WTC11 (cell line): ENCODE measurements at regions of chr20 and their contacts with region 1.

Region 1: DNA sequence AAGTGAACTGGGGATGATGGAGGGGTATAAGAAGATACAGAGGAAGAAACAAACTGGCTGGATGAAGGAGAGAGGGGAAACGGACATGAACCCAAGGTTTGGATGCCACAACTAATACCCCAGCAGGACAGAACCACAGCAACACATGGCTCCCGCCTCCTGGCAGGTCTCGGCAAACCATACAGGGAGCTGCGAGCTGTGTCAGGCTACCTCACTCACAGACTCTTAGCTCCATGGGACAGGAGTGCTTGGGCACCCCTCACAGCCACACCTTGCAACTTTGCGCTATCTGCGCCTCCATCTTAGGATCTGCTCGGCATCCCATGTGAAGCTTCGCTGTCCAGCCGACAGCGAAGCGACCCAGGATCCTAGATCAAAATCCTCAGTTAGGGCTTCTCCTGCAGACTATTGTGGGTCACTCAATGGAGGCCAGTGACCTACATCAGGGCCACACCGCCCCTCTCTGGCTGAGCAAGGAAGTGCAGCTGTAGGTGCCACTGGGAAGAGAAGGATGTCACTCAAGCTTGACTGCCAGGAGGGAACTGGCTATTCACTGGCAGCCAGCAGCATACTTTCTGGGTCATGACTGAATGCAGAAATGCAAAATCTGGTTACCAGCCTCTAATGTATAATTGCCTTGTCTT is 174.4 kb upstream of the RIN2 start:
- DNase-seq: peak; percentile 93
- ATAC-seq: peak; percentile 96
- H3K4me3 Mint-ChIP-seq: no peak overlapping the region
- H3K27ac Mint-ChIP-seq: no peak overlapping the region
- H3K4me1 Mint-ChIP-seq: peaks cover 13% of the 10 kb centered on the region
- H3K27me3 Mint-ChIP-seq: no peaks in the 10 kb centered on the region; the same call in 1 of the 2 replicates
- CTCF ChIP-seq: peak; percentile 86

Region 2: DNA sequence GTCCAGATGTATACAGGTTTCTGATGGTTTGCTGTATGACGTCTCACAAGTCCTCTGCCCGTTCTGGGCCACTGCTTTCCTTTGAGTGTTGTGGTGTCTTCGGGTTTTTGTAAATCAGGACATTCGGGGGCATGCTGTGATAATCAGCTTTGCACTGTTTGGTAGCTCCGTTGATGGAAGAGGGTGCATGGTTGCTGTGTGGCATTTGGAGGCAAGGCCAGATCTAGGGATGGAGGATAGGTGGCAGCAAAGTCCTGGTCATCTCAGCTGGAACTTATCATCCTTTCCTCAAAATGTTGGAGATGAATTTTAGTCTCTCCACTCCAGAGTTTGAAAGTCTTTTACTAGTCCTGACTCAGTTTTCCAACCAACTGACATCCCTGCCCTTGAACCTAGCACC is 679.0 kb before region 1 on chr20:
- CTCF ChIA-PET with region 1: interaction called, 10 read pairs
- POLR2A ChIA-PET with region 1: no interaction called
- DNase-seq: peak; percentile 13
- ATAC-seq: peak; percentile 62; the same call in 1 of the 2 replicates
- H3K4me3 Mint-ChIP-seq: no peak overlapping the region
- H3K27ac Mint-ChIP-seq: no peak overlapping the region
- H3K4me1 Mint-ChIP-seq: peaks cover 37% of the 10 kb centered on the region
- H3K27me3 Mint-ChIP-seq: no peaks in the 10 kb centered on the region; the same call in 1 of the 2 replicates
- CTCF ChIP-seq: no peak

Region 3: DNA sequence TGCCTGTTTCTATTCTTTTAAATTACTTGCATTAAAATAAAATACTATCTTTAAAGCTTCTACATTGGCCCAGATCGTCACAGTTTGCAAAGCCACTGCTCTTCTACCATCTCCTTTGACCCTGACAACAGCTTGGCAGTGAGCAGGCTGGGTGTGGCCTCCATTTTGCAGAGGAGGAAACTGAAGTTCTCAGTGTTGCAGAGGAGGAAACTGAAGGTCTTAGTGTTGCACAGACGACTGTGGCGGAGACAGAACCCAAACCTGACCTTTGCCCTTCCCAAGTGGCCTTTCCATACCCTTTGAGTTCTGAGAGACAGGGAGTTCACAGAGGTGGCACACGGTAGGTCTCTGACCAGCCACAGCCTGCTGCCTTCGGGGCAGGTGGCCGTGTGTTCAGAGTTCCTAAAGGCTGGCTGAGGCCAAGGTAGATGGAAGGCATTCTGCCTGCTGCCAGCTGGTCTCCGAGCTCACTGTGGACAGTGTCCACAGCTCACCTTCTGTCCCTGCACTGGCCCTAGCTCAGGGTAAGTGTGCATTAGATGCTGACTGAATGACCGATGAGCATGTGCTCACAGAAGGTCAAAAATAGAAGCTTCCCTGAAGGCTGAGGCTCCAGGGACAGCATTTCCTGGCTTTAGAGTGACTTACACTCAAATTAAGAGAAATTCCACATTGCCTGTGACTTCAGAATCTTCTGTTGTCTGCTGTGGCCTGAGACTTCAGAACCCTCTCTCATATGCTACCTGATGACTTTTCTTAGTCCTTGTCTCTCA is 484.7 kb before region 1 on chr20:
- CTCF ChIA-PET with region 1: interaction called, 10 read pairs
- POLR2A ChIA-PET with region 1: no interaction called
- DNase-seq: no peak
- ATAC-seq: no peak
- H3K4me3 Mint-ChIP-seq: no peak overlapping the region
- H3K27ac Mint-ChIP-seq: no peak overlapping the region
- H3K4me1 Mint-ChIP-seq: peaks cover 25% of the 10 kb centered on the region
- H3K27me3 Mint-ChIP-seq: no peaks in the 10 kb centered on the region
- CTCF ChIP-seq: no peak

Region 4: DNA sequence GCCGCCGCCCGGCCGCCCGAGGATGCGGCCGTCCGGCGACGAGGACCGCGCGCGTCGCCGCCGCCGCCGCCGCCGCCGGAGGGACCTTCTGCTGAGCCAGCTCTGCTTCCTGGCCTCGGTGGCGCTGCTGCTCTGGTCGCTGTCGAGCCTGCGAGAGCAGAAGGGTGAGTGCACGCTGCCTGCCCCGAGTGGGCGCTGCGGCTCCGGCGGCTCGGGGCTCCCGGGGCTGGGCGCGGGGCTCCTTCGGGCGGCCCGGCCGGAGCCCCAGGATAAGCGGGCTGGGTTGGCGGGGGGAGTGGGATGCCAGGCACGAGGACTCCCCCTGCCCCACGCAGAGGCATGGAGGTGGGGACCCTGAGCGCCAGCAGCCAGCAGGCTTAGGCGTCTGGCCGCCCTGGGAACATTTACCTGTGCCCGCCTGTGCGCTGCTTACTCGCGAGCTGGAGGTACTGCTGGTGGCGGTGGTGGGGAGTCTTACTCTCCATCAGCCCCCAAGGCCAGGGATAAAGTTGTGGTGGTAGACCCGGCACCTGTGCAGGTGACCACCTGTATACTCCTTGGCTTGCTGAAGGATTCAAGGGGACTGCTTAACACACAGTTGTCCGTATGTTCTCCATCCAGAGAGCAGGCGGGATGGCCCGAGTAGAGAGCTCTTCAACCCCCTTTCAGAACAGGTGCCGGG is 370.7 kb before region 1 on chr20:
- CTCF ChIA-PET with region 1: interaction called, 92 read pairs
- POLR2A ChIA-PET with region 1: no interaction called
- DNase-seq: peak; percentile 77
- ATAC-seq: peak; percentile 71
- H3K4me3 Mint-ChIP-seq: peak overlapping the region; percentile 65
- H3K27ac Mint-ChIP-seq: no peak overlapping the region
- H3K4me1 Mint-ChIP-seq: peaks cover 62% of the 10 kb centered on the region
- H3K27me3 Mint-ChIP-seq: peaks cover 18% of the 10 kb centered on the region
- CTCF ChIP-seq: no peak

Region 5: GRCh38 chr20:19314621-19315020 is 269.0 kb before region 1 on chr20:
- CTCF ChIA-PET with region 1: no interaction called
- POLR2A ChIA-PET with region 1: no interaction called
- DNase-seq: no peak
- ATAC-seq: no peak
- H3K4me3 Mint-ChIP-seq: no peak overlapping the region
- H3K27ac Mint-ChIP-seq: no peak overlapping the region
- H3K4me1 Mint-ChIP-seq: peaks cover 15% of the 10 kb centered on the region
- H3K27me3 Mint-ChIP-seq: no peaks in the 10 kb centered on the region
- CTCF ChIP-seq: no peak

Region 6: GRCh38 chr20:19552134-19552835 is 31.4 kb before region 1 on chr20:
- CTCF ChIA-PET with region 1: interaction called, 23 read pairs
- POLR2A ChIA-PET with region 1: no interaction called
- DNase-seq: peak; percentile 74
- ATAC-seq: peak; percentile 100
- H3K4me3 Mint-ChIP-seq: no peak overlapping the region
- H3K27ac Mint-ChIP-seq: no peak overlapping the region
- H3K4me1 Mint-ChIP-seq: peaks cover 8% of the 10 kb centered on the region
- H3K27me3 Mint-ChIP-seq: no peaks in the 10 kb centered on the region
- CTCF ChIP-seq: no peak

Region 7: DNA sequence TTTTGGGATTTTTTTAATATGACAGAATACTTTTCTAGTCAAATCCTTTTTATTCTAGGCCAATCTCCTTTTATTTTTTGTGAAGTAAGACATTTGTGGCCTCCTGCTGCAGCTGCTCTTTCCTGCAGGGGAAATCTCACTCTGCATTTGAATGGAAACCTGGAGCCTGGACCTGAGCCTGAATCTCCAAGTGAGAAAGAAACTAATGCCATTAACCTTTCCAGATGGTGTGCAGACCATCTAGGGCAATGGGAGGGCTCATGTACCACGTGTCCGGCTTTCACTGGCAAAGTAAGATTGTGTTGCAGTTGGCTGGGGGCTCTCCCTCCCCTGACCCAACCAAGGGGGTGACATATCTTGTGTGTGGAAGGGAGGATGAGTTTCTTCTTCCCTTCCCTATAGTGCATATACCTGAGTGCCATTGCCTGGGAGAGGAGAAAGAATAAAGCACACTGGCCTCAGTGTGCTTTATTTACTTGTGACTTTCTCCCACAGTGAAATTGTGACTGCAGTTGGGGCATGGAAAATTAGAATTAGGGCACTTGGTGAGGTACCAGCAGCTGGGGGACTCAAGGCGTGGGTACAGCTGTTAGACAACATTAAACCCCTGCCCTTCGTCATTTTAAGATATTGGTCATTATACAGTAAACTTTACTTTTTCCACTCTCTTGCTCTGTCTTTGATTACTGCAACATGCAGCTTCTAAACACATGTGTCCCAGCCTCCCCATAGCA is 14.6 kb after region 1 on chr20:
- CTCF ChIA-PET with region 1: interaction called, 12 read pairs
- POLR2A ChIA-PET with region 1: no interaction called
- DNase-seq: peak; percentile 14
- ATAC-seq: peak; percentile 62
- H3K4me3 Mint-ChIP-seq: no peak overlapping the region
- H3K27ac Mint-ChIP-seq: peak overlapping the region; percentile 71; the same call in 1 of the 2 replicates
- H3K4me1 Mint-ChIP-seq: peaks cover 20% of the 10 kb centered on the region
- H3K27me3 Mint-ChIP-seq: no peaks in the 10 kb centered on the region
- CTCF ChIP-seq: no peak

Region 8: GRCh38 chr20:19628570-19629169 is 45.0 kb after region 1 on chr20:
- CTCF ChIA-PET with region 1: interaction called, 10 read pairs
- POLR2A ChIA-PET with region 1: no interaction called
- DNase-seq: peak; percentile 75
- ATAC-seq: peak; percentile 89
- H3K4me3 Mint-ChIP-seq: no peak overlapping the region
- H3K27ac Mint-ChIP-seq: peak overlapping the region; percentile 69
- H3K4me1 Mint-ChIP-seq: peaks cover 4% of the 10 kb centered on the region
- H3K27me3 Mint-ChIP-seq: no peaks in the 10 kb centered on the region
- CTCF ChIP-seq: peak; percentile 80